Adrenal gland (tissue), 19 donors: ENCODE measurements at regions of chr19 and their contacts with region 1.

Region 1: GRCh38 chr19:12666265-12667048 is at the starts of genes MAN2B1 and WDR83:
- DNase-seq: peak; percentile 59 to 79 (median 72)
- H3K4me3 ChIP-seq: peak within 1 kb of the TSS in 3 of 4 donors; percentile 60 to 80 (median 71)
- H3K27ac ChIP-seq: peak within 1 kb of the TSS in 4 of 5 donors; percentile 8 to 72 (median 41)
- H3K4me1 ChIP-seq: peaks cover 17 to 36% of the 10 kb centered on the region in 2 donors
- H3K27me3 ChIP-seq: no peaks in the 10 kb centered on the region
- CTCF ChIP-seq: peak in 1 of 6 experiments; percentile 4
- POLR2A ChIP-seq: peak in 1 of 2 donors; percentile 15
- total RNA-seq, gene MAN2B1: 25.0 to 131 (median 111) TPM
- total RNA-seq, gene WDR83: 10.6 to 20.5 (median 13.9) TPM

Region 2: DNA sequence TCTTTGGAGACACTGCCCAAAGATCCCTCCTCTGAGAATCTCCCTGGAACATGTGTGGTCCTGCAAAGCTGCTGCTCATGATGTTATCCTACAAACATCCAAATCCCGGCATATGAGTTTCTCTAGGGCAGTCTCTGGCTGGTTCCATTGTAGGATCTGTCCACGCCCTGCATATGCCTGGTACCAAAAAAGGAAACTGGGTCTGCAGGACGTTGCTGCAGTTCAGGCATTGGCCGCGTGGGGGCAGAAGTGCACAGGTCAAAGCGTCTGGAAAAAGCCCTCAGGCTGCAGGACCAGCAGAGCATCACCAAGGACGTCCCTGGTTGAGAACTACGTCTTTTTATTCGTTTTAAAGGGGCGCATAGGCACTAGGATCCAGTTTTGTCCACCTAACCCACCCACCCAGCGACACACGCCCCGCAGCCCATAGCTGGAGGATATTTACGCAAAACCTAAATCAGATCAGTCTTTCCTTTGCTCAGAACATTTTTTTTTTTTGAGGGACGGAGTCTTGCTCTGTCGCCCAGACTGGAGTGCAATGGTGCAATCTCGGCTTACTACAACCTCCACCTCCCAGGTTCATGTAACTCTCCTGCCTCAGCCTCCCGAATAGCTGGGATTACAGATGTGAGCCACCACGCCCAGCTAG is 102.3 kb before region 1 on chr19:
- intact Hi-C with region 1: loop called (anchors 5 to 10 kb)
- DNase-seq: peak; percentile 83 to 97 (median 88)
- H3K4me3 ChIP-seq: no peak overlapping the region
- H3K27ac ChIP-seq: no peak overlapping the region
- H3K4me1 ChIP-seq: no peaks in the 10 kb centered on the region
- H3K27me3 ChIP-seq: no peaks in the 10 kb centered on the region
- CTCF ChIP-seq: peak; percentile 85 to 97 (median 92)
- POLR2A ChIP-seq: no peak

Region 3: GRCh38 chr19:12610540-12611360 is 55.7 kb before region 1 on chr19 and contains the starts of genes ZNF490 and ZNF791:
- intact Hi-C with region 1: loop called in 1 of 2 experiments (anchors 5 kb)
- DNase-seq: peak; percentile 97 to 100 (median 99)
- H3K4me3 ChIP-seq: peak within 1 kb of the TSS; percentile 86 to 99 (median 93)
- H3K27ac ChIP-seq: peak within 1 kb of the TSS; percentile 96 to 100 (median 99)
- H3K4me1 ChIP-seq: peaks cover 12 to 33% of the 10 kb centered on the region in 2 donors
- H3K27me3 ChIP-seq: no peaks in the 10 kb centered on the region
- CTCF ChIP-seq: no peak
- POLR2A ChIP-seq: peak; percentile 90 to 91
- total RNA-seq, gene ZNF490: 5.3 to 10.9 (median 6.8) TPM
- total RNA-seq, gene ZNF791: 6.9 to 33.4 (median 17.7) TPM

Region 4: DNA sequence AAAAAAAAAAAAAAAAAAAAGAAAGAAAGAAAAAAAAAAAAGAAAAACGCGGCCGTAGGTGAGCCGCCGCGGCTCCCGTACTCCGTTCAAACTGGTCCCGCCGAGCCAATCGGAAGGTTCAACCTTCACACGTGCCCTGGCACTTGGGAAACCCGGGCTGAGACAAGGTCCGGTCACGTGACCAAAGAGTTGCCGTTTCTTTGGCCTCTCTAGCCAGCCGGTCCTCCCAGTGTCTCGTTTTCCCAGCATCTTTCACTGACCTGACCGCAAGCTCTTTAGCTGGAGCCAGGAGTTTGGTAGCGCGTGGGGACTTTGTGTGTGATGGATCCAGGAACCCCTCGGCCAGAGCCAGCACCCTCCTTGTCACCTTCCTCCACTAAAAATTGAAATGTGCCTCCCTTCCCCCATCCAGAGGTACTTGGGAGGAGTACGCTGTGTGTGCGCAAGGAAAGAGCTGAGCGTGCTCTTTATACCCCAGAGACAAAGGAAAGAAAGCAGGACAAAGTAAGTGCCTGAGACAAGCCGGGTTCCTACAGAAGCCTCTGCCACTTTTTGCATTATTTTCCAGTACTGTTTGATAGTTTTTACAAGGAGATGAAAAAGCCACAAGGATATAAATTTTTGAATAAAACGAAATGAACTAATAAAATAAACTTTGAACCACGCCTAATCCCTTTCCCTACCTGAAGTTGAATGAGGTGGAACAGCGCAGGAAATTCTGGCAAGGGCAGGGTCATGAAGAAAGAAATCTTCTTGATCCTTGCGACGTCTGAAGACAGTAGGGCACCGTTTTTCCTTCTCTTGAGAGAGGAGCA is 56.3 kb after region 1 on chr19:
- intact Hi-C with region 1: no loop called
- DNase-seq: peak; percentile 96 to 99 (median 99)
- H3K4me3 ChIP-seq: peak overlapping the region in 2 of 4 donors; percentile 64 to 98
- H3K27ac ChIP-seq: peak overlapping the region; percentile 89 to 99 (median 92)
- H3K4me1 ChIP-seq: peaks cover 20 to 27% of the 10 kb centered on the region in 2 donors
- H3K27me3 ChIP-seq: no peaks in the 10 kb centered on the region
- CTCF ChIP-seq: no peak
- POLR2A ChIP-seq: peak; percentile 65 to 83

Region 5: GRCh38 chr19:12924616-12925276 is 258.3 kb after region 1 on chr19:
- intact Hi-C with region 1: no loop called
- DNase-seq: no peak
- H3K4me3 ChIP-seq: no peak overlapping the region
- H3K27ac ChIP-seq: no peak overlapping the region
- H3K4me1 ChIP-seq: no peaks in the 10 kb centered on the region
- H3K27me3 ChIP-seq: no peaks in the 10 kb centered on the region
- CTCF ChIP-seq: no peak
- POLR2A ChIP-seq: no peak